Naive thymus-derived CD4-positive, alpha-beta T cell (primary cell): ENCODE measurements at regions of chr18 and their contacts with region 1.

Region 1: GRCh38 chr18:79200546-79201268 is 131.5 kb downstream of the ATP9B start:
- DNase-seq: peak in 3 of 9 donors; percentile 3 to 43 (median 4)
- ATAC-seq: peak; percentile 78
- H3K4me3 ChIP-seq: no peak overlapping the region
- H3K4me3 Mint-ChIP-seq: no peak overlapping the region
- H3K27ac ChIP-seq: no peak overlapping the region
- H3K27ac Mint-ChIP-seq: peak overlapping the region in 4 of 9 donors; percentile 7 to 38 (median 22)
- H3K4me1 ChIP-seq: no peaks in the 10 kb centered on the region
- H3K4me1 Mint-ChIP-seq: peaks cover 5 to 26% (median 8%) of the 10 kb centered on the region in 7 donors
- H3K27me3 ChIP-seq: no peaks in the 10 kb centered on the region
- H3K27me3 Mint-ChIP-seq: no peaks in the 10 kb centered on the region

Region 2: DNA sequence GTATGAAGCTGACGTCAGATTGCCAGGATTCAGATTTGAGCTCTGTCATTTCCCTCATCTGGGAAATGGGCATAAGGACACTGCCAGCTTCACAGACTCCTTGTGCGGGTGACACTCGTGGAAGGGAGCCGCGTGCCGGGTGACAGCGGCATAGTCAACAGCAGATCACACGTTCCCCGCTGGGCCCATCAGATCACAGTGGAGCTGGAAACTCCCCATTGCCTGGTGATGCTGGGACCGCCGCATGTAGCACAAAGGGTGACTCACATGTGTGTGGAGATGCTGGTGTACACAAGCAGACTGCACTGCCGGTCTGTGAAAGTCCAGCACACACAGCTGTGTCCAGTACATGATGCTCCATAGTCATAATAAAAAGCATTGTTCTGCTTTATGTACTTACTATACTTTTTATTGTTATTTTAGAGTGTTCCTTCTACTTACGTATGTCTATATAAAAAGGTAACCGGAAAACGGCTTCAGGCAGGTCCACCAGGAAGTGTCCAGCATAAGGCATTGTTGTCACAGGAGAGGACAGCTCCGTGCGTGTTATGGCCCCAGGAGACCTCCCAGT is 189.3 kb before region 1 on chr18:
- CTCF ChIA-PET with region 1: no interaction called
- POLR2A ChIA-PET with region 1: no interaction called
- intact Hi-C with region 1: no loop called
- DNase-seq: no peak
- ATAC-seq: no peak
- H3K4me3 ChIP-seq: no peak overlapping the region
- H3K4me3 Mint-ChIP-seq: no peak overlapping the region
- H3K27ac ChIP-seq: no peak overlapping the region
- H3K27ac Mint-ChIP-seq: no peak overlapping the region
- H3K4me1 ChIP-seq: no peaks in the 10 kb centered on the region
- H3K4me1 Mint-ChIP-seq: no peaks in the 10 kb centered on the region
- H3K27me3 ChIP-seq: no peaks in the 10 kb centered on the region
- H3K27me3 Mint-ChIP-seq: peaks cover 9 to 18% (median 9%) of the 10 kb centered on the region in 5 donors

Region 3: GRCh38 chr18:79260510-79260909 is 59.8 kb after region 1 on chr18:
- CTCF ChIA-PET with region 1: no interaction called
- POLR2A ChIA-PET with region 1: no interaction called
- intact Hi-C with region 1: loop called in 1 of 2 experiments (anchors 10 kb)
- DNase-seq: no peak
- ATAC-seq: no peak
- H3K4me3 ChIP-seq: no peak overlapping the region
- H3K4me3 Mint-ChIP-seq: no peak overlapping the region
- H3K27ac ChIP-seq: no peak overlapping the region
- H3K27ac Mint-ChIP-seq: no peak overlapping the region
- H3K4me1 ChIP-seq: no peaks in the 10 kb centered on the region
- H3K4me1 Mint-ChIP-seq: peaks cover 0 to 4% (median 0%) of the 10 kb centered on the region in 7 donors
- H3K27me3 ChIP-seq: no peaks in the 10 kb centered on the region
- H3K27me3 Mint-ChIP-seq: no peaks in the 10 kb centered on the region